ENCODE measurements at regions of chr2 and their contacts with region 1.

Region 1: DNA sequence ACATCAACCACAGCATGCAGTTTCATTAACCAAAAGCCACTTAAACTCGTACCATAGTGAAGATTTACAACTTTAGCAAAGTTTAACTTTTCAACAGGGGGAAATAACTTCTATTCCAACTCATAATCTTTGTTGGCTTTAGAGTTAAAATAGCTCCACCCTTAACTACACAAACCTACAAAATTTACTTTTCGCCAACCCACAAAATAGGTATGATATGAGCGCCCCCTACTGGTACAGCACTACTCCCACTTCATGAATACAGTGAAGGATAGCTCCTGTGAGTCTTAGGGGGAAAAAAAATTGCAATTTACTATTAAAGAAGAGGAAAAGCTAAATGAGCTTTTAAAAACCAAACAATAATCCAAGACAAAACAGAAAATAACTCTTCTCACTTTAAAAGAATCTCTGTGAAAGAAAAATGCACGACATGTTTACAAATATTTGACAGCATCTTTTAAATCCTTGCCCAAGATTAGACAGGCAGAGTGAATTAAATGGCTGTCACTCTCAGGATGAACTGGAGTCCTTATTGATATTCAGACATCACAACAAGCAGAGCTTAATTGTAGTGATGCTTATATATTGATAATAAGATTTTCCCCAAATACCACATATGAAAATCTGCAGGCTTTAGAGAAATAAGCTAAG is 32.2 kb downstream of the TMEFF2 start:
- DNase-seq: peak; percentile 60
- H3K4me3 Mint-ChIP-seq: no peak overlapping the region
- H3K27ac Mint-ChIP-seq: no peak overlapping the region
- H3K4me1 Mint-ChIP-seq: peaks cover 15% of the 10 kb centered on the region
- H3K27me3 Mint-ChIP-seq: peaks cover 22% of the 10 kb centered on the region

Region 2: GRCh38 chr2:191539068-191539467 is 623.4 kb before region 1 on chr2:
- CTCF ChIA-PET with region 1: interaction called, 15 read pairs
- POLR2A ChIA-PET with region 1: no interaction called
- DNase-seq: peak; percentile 30
- H3K4me3 Mint-ChIP-seq: no peak overlapping the region
- H3K27ac Mint-ChIP-seq: no peak overlapping the region
- H3K4me1 Mint-ChIP-seq: no peaks in the 10 kb centered on the region
- H3K27me3 Mint-ChIP-seq: peaks cover 8% of the 10 kb centered on the region

Region 3: GRCh38 chr2:191555092-191555742 is 607.3 kb before region 1 on chr2:
- CTCF ChIA-PET with region 1: interaction called, 101 read pairs
- POLR2A ChIA-PET with region 1: interaction called, 4 read pairs
- DNase-seq: peak; percentile 82
- H3K4me3 Mint-ChIP-seq: no peak overlapping the region
- H3K27ac Mint-ChIP-seq: no peak overlapping the region
- H3K4me1 Mint-ChIP-seq: peaks cover 16% of the 10 kb centered on the region
- H3K27me3 Mint-ChIP-seq: peaks cover 15% of the 10 kb centered on the region

Region 4: GRCh38 chr2:191560411-191560980 is 602.0 kb before region 1 on chr2:
- CTCF ChIA-PET with region 1: interaction called, 101 read pairs
- POLR2A ChIA-PET with region 1: interaction called, 4 read pairs
- DNase-seq: no peak
- H3K4me3 Mint-ChIP-seq: no peak overlapping the region
- H3K27ac Mint-ChIP-seq: no peak overlapping the region
- H3K4me1 Mint-ChIP-seq: peaks cover 30% of the 10 kb centered on the region
- H3K27me3 Mint-ChIP-seq: peaks cover 25% of the 10 kb centered on the region

Region 5: DNA sequence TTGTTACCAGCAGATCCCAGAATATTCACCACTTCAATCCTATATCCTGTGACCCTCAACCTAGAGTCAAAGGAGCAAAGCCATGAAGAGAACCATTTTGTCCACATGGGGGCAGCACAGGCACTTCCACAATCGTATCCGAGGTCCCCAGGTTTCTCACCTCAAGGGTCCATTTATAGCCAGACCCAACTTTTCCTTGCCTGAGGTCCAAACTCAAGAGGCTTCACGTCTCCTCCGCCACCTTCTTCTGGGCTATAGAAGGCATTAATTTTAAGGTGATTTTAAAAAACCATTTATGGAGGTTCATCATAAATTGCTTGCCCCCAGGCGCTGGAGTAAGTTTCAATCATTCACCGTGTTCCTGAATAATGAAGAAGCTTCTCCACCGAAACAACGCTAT is 596.2 kb before region 1 on chr2:
- CTCF ChIA-PET with region 1: interaction called, 20 read pairs
- POLR2A ChIA-PET with region 1: no interaction called
- DNase-seq: peak; percentile 67
- H3K4me3 Mint-ChIP-seq: no peak overlapping the region
- H3K27ac Mint-ChIP-seq: no peak overlapping the region
- H3K4me1 Mint-ChIP-seq: peaks cover 49% of the 10 kb centered on the region
- H3K27me3 Mint-ChIP-seq: peaks cover 42% of the 10 kb centered on the region

Region 6: DNA sequence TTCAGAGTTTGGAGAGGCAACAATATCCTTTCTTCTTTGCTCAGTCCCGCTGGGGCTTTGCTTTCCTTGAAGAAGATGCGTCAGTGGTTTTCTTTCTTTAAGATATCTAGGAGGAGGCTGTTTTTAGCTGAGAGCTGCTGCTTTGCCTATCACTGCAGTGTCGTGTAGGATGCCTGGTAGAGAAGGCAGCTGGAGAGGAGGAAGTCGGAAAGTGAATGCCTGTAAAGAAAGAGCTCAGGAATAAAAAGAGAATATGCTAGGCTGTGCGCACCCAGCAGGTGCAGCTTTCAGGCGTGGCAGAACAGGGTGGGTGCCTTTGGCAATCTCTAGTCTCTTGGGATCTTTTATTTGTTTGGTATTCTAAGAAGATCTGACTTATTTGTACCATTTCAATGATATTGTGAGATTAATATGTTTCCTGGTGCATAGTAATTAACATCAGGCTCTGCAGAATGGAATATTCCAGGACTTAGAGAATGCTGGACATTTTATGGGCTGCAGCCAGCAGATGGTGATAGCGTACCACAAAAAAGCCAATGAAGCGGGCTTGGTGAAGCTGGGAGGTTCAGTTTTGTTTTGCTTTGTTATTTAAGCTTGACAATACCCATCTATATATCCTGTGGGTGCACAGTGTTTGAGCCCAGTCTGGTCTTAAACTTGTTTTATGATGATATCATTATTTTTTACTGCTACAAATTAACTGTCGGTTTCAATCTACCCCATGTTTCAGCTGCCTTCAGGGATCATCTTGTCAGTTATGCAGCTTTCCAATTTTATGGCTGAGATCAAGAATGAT is 350.5 kb before region 1 on chr2:
- CTCF ChIA-PET with region 1: interaction called, 34 read pairs
- POLR2A ChIA-PET with region 1: no interaction called
- DNase-seq: peak; percentile 24
- H3K4me3 Mint-ChIP-seq: no peak overlapping the region
- H3K27ac Mint-ChIP-seq: no peak overlapping the region
- H3K4me1 Mint-ChIP-seq: no peaks in the 10 kb centered on the region
- H3K27me3 Mint-ChIP-seq: peaks cover 21% of the 10 kb centered on the region

Measured in activated CD4-positive, alpha-beta memory T cell treated with anti-CD3 and anti-CD28 coated beads, Interleukin-2, amount 10 ng/mL, durations not matched to agents 7 days and 5 days (primary cell).